ENCODE measurements at regions of chr3 and their contacts with region 1.

Region 1: DNA sequence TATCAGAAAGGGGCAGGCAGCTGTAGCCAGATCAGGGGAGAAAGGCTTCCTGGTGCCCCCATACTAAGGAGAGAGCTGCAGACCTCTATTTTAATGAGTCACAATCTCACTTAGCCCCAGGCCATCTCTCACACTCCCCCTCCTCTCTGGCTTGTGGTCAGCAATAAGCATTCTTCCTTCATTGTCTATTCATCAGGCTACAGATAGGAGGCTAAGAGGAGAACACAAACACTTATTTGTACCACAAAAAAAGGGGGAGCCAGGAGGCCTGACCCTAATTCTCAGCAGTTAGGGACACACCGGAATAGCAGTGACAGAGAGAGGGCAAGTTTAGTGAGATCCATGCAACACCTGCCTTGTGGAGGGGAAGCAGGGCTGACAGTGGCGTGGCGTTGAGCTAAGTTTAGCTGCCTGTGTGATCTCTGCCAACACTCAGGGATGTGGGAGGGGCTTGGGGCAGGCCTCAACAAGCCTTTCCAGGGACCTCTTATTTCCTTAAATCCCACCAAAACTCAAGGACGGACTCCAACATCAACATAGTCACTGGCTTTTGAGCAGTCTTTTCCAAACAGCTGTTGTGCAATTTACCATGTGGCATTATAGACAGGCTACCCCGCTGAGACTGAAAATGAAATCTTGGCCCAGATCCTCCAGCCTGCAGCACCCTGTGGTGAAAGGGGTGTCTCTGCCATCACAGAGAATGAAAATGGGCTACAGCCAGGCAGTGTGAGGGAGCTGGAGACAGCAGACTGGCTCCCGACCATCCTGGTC is 191.9 kb upstream of the TSC22D2 start:
- DNase-seq: no peak
- ATAC-seq: no peak
- H3K4me3 ChIP-seq: no peak overlapping the region
- H3K27ac ChIP-seq: no peak overlapping the region
- H3K4me1 ChIP-seq: peaks cover 0 to 1% of the 10 kb centered on the region in 2 experiments; a peak in 1 of 5 replicates
- H3K27me3 ChIP-seq: peaks cover 11 to 43% of the 10 kb centered on the region in 2 experiments; a peak in 3 of 5 replicates
- CTCF ChIP-seq: no peak
- EP300 ChIP-seq: no peak
- POLR2A ChIP-seq: no peak
- RAD21 ChIP-seq: no peak

Region 2: GRCh38 chr3:149765762-149766334 is 450.4 kb before region 1 on chr3:
- CTCF ChIA-PET with region 1: no interaction called
- POLR2A ChIA-PET with region 1: no interaction called
- in situ Hi-C with region 1: no loop called
- intact Hi-C with region 1: loop called (anchors 5 kb)
- DNase-seq: peak in 1 of 4 experiments; percentile 10
- ATAC-seq: no peak
- H3K4me3 ChIP-seq: no peak overlapping the region
- H3K27ac ChIP-seq: no peak overlapping the region
- H3K4me1 ChIP-seq: no peaks in the 10 kb centered on the region
- H3K27me3 ChIP-seq: peaks cover 7 to 14% of the 10 kb centered on the region in 2 experiments; a peak in 3 of 5 replicates
- CTCF ChIP-seq: peak; percentile 24 to 54 (median 27); a peak in 3 of 6 replicates
- EP300 ChIP-seq: no peak
- POLR2A ChIP-seq: no peak
- RAD21 ChIP-seq: peak; percentile 23 to 48; a peak in 2 of 4 replicates

Region 3: GRCh38 chr3:149936812-149937233 is 279.4 kb before region 1 on chr3:
- CTCF ChIA-PET with region 1: interaction called, 5 read pairs
- POLR2A ChIA-PET with region 1: no interaction called
- in situ Hi-C with region 1: no loop called
- intact Hi-C with region 1: loop called (anchors 1 kb)
- DNase-seq: peak; percentile 35 to 69 (median 54)
- ATAC-seq: peak; percentile 90
- H3K4me3 ChIP-seq: no peak overlapping the region
- H3K27ac ChIP-seq: no peak overlapping the region
- H3K4me1 ChIP-seq: no peaks in the 10 kb centered on the region; a peak in 1 of 5 replicates
- H3K27me3 ChIP-seq: no peaks in the 10 kb centered on the region
- CTCF ChIP-seq: peak; percentile 70 to 80 (median 77)
- EP300 ChIP-seq: no peak
- POLR2A ChIP-seq: no peak
- RAD21 ChIP-seq: peak; percentile 64 to 76

Region 4: GRCh38 chr3:149969940-149970715 is 246.1 kb before region 1 on chr3:
- CTCF ChIA-PET with region 1: interaction called, 20 read pairs
- POLR2A ChIA-PET with region 1: no interaction called
- in situ Hi-C with region 1: loop called (anchors 10 kb)
- intact Hi-C with region 1: loop called (anchors 2 kb)
- DNase-seq: peak in 2 of 4 experiments; percentile 9 to 14
- ATAC-seq: no peak
- H3K4me3 ChIP-seq: peak overlapping the region; percentile 45
- H3K27ac ChIP-seq: no peak overlapping the region
- H3K4me1 ChIP-seq: peaks cover 0 to 18% of the 10 kb centered on the region in 2 experiments; a peak in 3 of 5 replicates
- H3K27me3 ChIP-seq: peaks cover 6 to 13% of the 10 kb centered on the region in 2 experiments; a peak in 3 of 5 replicates
- CTCF ChIP-seq: no peak
- EP300 ChIP-seq: no peak
- POLR2A ChIP-seq: no peak
- RAD21 ChIP-seq: no peak

Region 5: GRCh38 chr3:150870396-150870795 is 654.2 kb after region 1 on chr3:
- CTCF ChIA-PET with region 1: no interaction called
- POLR2A ChIA-PET with region 1: no interaction called
- in situ Hi-C with region 1: no loop called
- intact Hi-C with region 1: loop called (anchors 5 kb)
- DNase-seq: no peak
- ATAC-seq: no peak
- H3K4me3 ChIP-seq: no peak overlapping the region
- H3K27ac ChIP-seq: no peak overlapping the region
- H3K4me1 ChIP-seq: no peaks in the 10 kb centered on the region
- H3K27me3 ChIP-seq: peaks cover 2 to 10% of the 10 kb centered on the region in 2 experiments; a peak in 2 of 5 replicates
- CTCF ChIP-seq: no peak
- EP300 ChIP-seq: no peak
- POLR2A ChIP-seq: no peak
- RAD21 ChIP-seq: no peak

Measured in K562 (cell line).